GM12878 (cell line): ENCODE measurements at regions of chr12 and their contacts with region 1.

Region 1: GRCh38 chr12:68236421-68237059 is 10.9 kb upstream of the IL26 start:
- DNase-seq: peak; percentile 40
- ATAC-seq: peak; percentile 65
- H3K4me3 ChIP-seq: peak overlapping the region; percentile 41; the same call in 1 of the 2 replicates
- H3K27ac ChIP-seq: peak overlapping the region; percentile 69
- H3K4me1 ChIP-seq: peaks cover 34% of the 10 kb centered on the region
- H3K27me3 ChIP-seq: no peaks in the 10 kb centered on the region
- CTCF ChIP-seq: no peak; a peak in 1 of 6 replicates
- EP300 ChIP-seq: no peak
- POLR2A ChIP-seq: no peak
- RAD21 ChIP-seq: no peak

Region 2: GRCh38 chr12:68250454-68250853 is 13.9 kb after region 1 on chr12:
- CTCF ChIA-PET with region 1: interaction called, 3 read pairs
- POLR2A ChIA-PET with region 1: no interaction called
- RAD21 ChIA-PET with region 1: no interaction called
- SMC1A ChIA-PET with region 1: interaction called, 10 read pairs
- in situ Hi-C with region 1: no loop called
- intact Hi-C with region 1: no loop called
- DNase-seq: no peak
- ATAC-seq: no peak
- H3K4me3 ChIP-seq: no peak overlapping the region
- H3K27ac ChIP-seq: no peak overlapping the region
- H3K4me1 ChIP-seq: no peaks in the 10 kb centered on the region
- H3K27me3 ChIP-seq: no peaks in the 10 kb centered on the region
- CTCF ChIP-seq: no peak
- EP300 ChIP-seq: no peak
- POLR2A ChIP-seq: no peak
- RAD21 ChIP-seq: no peak

Region 3: GRCh38 chr12:68279227-68280054 is 42.9 kb after region 1 on chr12:
- CTCF ChIA-PET with region 1: interaction called, 4 read pairs
- POLR2A ChIA-PET with region 1: no interaction called
- RAD21 ChIA-PET with region 1: interaction called, 10 read pairs
- SMC1A ChIA-PET with region 1: interaction called, 5 read pairs
- in situ Hi-C with region 1: no loop called
- intact Hi-C with region 1: no loop called
- DNase-seq: no peak
- ATAC-seq: no peak
- H3K4me3 ChIP-seq: no peak overlapping the region
- H3K27ac ChIP-seq: no peak overlapping the region
- H3K4me1 ChIP-seq: peaks cover 9% of the 10 kb centered on the region; the same call in 1 of the 2 replicates
- H3K27me3 ChIP-seq: no peaks in the 10 kb centered on the region
- CTCF ChIP-seq: no peak
- EP300 ChIP-seq: no peak
- POLR2A ChIP-seq: no peak
- RAD21 ChIP-seq: no peak

Region 4: DNA sequence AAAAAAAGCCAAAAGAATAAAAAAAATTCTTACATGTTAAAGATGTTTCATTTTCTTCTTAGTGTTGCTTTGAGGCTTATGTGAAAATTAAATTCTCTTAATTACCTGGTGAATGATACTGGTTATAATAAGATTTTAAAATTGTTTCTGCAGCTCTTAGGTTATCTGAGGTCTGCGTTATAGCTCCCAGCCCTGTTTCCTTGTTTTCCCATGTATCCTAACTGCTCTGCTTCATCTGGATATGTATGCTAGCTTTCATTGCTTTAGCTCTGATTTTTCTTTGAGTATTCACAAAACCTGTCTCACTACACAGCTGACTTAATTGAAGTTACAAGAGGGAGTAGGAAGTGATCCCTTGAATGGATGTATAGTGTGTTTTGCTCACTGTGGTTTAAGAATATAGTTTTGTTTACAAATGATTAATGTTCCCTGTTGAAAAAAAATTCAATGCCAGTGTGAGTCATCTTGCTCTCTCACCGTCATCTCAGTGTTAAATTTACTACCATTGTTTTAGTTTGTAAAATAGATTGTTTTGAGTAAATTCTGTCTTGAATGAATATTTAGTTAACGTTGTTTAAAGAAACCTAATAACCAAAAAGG is 1029.6 kb after region 1 on chr12:
- CTCF ChIA-PET with region 1: no interaction called
- POLR2A ChIA-PET with region 1: no interaction called
- RAD21 ChIA-PET with region 1: no interaction called
- SMC1A ChIA-PET with region 1: no interaction called
- in situ Hi-C with region 1: no loop called
- intact Hi-C with region 1: no loop called
- DNase-seq: no peak
- ATAC-seq: peak; percentile 36; the same call in 1 of the 3 replicates
- H3K4me3 ChIP-seq: no peak overlapping the region
- H3K27ac ChIP-seq: no peak overlapping the region
- H3K4me1 ChIP-seq: no peaks in the 10 kb centered on the region
- H3K27me3 ChIP-seq: no peaks in the 10 kb centered on the region
- CTCF ChIP-seq: no peak
- EP300 ChIP-seq: no peak
- POLR2A ChIP-seq: no peak
- RAD21 ChIP-seq: no peak